Activated CD4-positive, alpha-beta T cell treated with anti-CD3 and anti-CD28 coated beads for 36 hours (primary cell): ENCODE measurements at regions of chr6 and their contacts with region 1.

Region 1: DNA sequence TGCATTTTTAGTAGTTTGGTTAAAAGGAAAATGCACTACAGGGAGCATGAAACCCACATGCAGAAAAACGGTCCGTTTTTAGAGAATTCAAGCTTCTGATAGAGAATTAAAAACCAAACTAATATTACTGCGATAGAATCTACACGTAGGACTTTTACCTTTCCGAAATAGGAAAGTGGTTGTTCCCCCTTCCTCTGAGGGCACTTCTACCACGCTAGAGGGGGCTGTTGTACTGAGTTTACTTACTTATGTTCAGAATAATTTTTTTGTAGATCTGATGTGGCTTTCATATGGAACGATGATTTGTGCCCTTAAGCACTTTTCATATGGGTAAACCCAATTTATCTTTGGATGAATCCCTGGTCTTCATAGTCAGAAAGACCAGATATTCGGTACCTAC is 264.3 kb upstream of the PLN start:
- DNase-seq: peak; percentile 65
- ATAC-seq: peak; percentile 61
- H3K4me3 Mint-ChIP-seq: no peak overlapping the region
- H3K27ac Mint-ChIP-seq: no peak overlapping the region
- H3K4me1 Mint-ChIP-seq: peaks cover 2% of the 10 kb centered on the region
- H3K27me3 Mint-ChIP-seq: peaks cover 4% of the 10 kb centered on the region

Region 2: DNA sequence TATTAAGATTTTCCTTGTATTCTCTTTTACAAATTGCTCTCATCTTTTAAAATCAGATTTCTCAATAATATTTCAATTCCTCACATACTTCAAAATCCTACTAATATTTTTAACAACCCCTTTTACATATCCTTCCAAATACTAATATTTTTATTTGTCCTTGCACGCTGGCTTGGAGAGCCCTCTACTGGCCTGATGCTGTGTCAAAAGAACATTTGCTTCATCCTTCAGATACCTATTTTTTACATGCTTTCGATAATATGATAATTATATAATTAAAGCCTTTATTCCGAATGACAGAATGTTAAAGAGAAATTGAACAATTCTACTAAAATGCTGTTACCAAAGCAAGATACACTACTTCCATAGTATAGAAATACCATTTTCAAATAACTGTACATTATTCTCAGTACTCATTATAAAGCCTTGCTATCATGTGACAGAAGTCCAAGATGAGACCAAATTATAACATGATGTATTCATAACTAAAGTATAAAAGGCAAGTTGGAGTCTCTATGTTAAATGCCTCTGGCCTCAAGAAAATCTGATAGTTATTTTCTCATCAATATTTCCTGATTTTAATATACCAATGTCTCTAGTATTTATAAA is 225.3 kb after region 1 on chr6:
- CTCF ChIA-PET with region 1: no interaction called
- POLR2A ChIA-PET with region 1: no interaction called
- intact Hi-C with region 1: loop called (anchors 2 to 5 kb)
- DNase-seq: peak; percentile 39
- ATAC-seq: no peak
- H3K4me3 Mint-ChIP-seq: no peak overlapping the region
- H3K27ac Mint-ChIP-seq: no peak overlapping the region
- H3K4me1 Mint-ChIP-seq: peaks cover 12% of the 10 kb centered on the region
- H3K27me3 Mint-ChIP-seq: no peaks in the 10 kb centered on the region

Region 3: DNA sequence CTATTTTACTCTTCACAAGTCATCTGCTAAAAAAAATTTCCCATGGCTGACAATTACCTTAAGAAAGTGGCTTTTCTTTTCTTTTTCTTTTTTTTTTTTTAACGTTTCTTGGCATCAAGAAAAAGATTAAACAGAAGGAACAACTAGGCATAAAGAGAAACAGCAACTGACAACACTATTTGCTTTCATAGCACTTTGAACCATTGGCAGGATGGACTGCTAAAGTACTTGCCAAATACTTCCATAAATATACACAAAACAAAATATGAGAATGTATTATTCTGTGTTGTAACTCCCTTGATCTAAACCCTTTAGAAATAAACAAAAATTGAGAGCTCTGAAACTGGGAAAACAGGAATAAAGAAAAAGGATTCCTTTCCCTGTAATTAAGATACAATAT is 244.4 kb after region 1 on chr6:
- CTCF ChIA-PET with region 1: no interaction called
- POLR2A ChIA-PET with region 1: no interaction called
- intact Hi-C with region 1: no loop called
- DNase-seq: no peak
- ATAC-seq: no peak
- H3K4me3 Mint-ChIP-seq: no peak overlapping the region
- H3K27ac Mint-ChIP-seq: no peak overlapping the region
- H3K4me1 Mint-ChIP-seq: peaks cover 38% of the 10 kb centered on the region
- H3K27me3 Mint-ChIP-seq: no peaks in the 10 kb centered on the region

Region 4: DNA sequence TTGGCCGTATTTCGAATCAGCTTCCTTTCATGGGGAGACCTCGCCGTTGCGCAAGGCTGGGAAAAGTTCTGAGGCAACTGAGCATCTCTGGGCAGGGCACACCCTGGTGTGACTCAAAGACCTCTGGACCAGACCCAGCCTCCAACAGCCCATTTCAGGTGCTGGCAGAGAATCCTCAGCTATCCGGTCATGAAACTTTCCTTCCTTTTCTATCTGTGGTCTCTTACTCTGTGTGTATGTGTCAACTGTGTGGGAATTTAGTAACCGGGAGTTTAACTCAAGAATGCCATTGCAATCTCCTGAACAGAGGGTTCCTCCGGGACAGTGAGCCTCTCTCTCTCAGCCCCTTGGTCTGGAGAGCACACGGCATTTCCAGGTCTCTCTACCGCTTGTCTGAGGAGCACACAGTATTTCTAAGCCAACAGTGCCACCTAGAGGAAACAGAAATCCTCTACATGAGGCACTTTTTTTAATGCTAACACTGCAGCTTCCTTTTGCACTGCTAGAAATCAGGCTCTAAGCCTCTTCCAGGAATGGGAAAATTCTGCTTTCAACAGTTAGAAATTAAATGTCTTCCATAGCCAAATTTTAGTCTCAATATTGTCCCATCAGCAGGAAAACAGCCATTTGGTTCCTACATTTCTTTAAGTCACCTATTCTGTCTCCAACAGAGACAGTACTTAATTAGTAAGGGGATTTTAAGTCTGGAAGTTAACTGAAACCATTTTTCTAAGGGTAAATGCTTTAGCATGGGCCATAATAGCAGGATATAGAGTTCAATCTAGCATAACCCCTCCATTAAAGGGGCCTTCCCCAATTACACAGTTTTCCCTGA is 297.0 kb after region 1 on chr6:
- CTCF ChIA-PET with region 1: no interaction called
- POLR2A ChIA-PET with region 1: no interaction called
- intact Hi-C with region 1: loop called in 1 of 2 experiments (anchors 1 kb)
- DNase-seq: peak; percentile 19
- ATAC-seq: peak; percentile 77
- H3K4me3 Mint-ChIP-seq: no peak overlapping the region
- H3K27ac Mint-ChIP-seq: peak overlapping the region; percentile 80
- H3K4me1 Mint-ChIP-seq: no peaks in the 10 kb centered on the region
- H3K27me3 Mint-ChIP-seq: no peaks in the 10 kb centered on the region

Region 5: DNA sequence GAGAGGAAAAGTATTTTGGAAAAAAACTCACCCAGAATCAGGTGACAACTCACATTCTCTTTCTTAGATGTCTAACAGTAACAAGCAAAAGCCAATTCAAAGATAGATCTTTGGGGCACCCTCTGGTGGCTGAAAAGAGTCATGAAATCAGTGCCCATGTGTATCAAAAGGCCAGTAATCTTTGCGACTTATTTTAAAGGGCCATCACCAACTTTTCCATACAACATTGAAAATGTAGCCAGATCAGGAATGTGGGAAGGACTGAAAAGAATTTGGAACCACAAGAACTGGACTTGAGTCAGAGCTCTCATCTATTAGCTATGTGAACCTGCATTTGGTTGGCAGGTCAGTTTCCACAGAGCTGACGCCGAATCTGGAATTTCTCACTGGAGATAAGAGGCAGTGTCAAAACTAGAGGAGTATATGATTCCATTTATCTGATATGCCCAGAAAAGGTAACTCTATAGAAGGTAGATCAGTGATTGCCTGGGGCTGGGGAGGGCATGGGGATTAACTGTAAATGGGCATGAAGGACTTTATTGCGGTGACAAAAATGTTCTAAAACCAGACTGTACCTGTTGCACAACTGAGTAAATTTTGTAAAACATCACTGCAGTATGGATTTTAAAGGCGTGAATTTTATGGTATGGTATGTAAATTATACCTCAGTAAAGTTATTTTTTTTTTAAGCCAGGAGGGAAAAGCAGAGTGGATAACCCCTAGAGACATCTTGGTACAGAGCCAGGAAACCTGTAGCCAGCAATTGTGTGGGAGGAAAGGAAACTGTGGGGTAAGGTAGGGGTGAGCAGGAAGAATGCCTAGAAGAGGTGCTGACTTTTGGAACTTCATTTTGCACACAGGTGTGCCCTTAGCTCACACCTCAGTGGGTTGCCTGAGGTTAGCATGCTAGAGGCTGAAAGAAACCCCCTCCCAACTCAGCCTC is 493.1 kb after region 1 on chr6:
- CTCF ChIA-PET with region 1: no interaction called
- POLR2A ChIA-PET with region 1: no interaction called
- intact Hi-C with region 1: loop called (anchors 2 to 5 kb)
- DNase-seq: peak; percentile 78
- ATAC-seq: peak; percentile 92
- H3K4me3 Mint-ChIP-seq: no peak overlapping the region
- H3K27ac Mint-ChIP-seq: peak overlapping the region; percentile 10
- H3K4me1 Mint-ChIP-seq: peaks cover 22% of the 10 kb centered on the region
- H3K27me3 Mint-ChIP-seq: no peaks in the 10 kb centered on the region

Region 6: GRCh38 chr6:118968416-118968815 is 684.6 kb after region 1 on chr6:
- CTCF ChIA-PET with region 1: no interaction called
- POLR2A ChIA-PET with region 1: no interaction called
- intact Hi-C with region 1: loop called in 1 of 2 experiments (anchors 10 kb)
- DNase-seq: no peak
- ATAC-seq: no peak
- H3K4me3 Mint-ChIP-seq: no peak overlapping the region
- H3K27ac Mint-ChIP-seq: no peak overlapping the region
- H3K4me1 Mint-ChIP-seq: no peaks in the 10 kb centered on the region
- H3K27me3 Mint-ChIP-seq: no peaks in the 10 kb centered on the region